Natural killer cell (primary cell): ENCODE measurements at regions of chr1 and their contacts with region 1.

Region 1: DNA sequence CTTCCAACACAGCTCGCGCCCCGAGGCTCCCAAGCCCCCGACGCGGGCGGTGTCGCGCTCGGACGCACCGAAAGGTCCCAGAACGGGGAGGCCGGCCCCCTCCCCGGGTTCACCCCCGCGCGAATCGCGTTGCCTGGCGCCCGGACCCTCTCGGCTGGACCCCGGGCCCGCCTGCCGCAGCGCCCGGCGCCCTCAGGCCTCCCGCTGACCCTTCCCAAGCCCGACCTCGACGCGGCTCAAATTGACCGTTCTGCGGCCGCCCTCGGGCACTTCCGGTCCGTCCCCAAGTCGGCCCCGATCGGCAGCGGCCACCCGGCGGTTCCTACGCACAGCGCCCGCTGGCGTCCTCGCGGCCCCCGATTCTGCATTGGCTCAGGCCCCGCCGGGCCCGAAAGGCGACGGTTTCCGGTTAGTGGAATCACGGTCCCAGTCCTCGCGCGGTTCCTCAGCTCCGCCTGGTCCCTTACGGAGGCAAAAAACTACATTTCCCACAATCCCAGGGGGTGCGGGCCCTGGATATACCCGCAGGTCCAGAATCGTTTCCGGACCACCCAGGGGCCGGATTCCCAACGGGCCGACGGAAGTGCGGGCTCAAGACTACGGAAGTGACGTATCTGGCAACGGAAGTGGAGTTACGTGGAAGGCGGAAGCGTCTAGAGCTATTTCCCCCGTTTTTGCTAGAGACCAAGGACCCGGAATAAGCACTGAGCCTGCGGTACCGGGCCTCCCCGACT is at the start of gene AURKAIP1:
- DNase-seq: peak; percentile 90 to 99
- ATAC-seq: peak; percentile 76 to 91 (median 81)
- H3K4me3 ChIP-seq: peak within 1 kb of the TSS; percentile 80
- H3K4me3 Mint-ChIP-seq: peak within 1 kb of the TSS; percentile 97
- H3K27ac ChIP-seq: peak within 1 kb of the TSS; percentile 96
- H3K27ac Mint-ChIP-seq: peak within 1 kb of the TSS; percentile 97 to 98
- H3K4me1 ChIP-seq: peaks cover 49% of the 10 kb centered on the region
- H3K4me1 Mint-ChIP-seq: peaks cover 10 to 27% of the 10 kb centered on the region in 2 donors
- H3K27me3 ChIP-seq: no peaks in the 10 kb centered on the region
- H3K27me3 Mint-ChIP-seq: no peaks in the 10 kb centered on the region
- CTCF ChIP-seq: no peak
- total RNA-seq, gene AURKAIP1: 60.0 to 76.3 (median 64.6) TPM

Region 2: DNA sequence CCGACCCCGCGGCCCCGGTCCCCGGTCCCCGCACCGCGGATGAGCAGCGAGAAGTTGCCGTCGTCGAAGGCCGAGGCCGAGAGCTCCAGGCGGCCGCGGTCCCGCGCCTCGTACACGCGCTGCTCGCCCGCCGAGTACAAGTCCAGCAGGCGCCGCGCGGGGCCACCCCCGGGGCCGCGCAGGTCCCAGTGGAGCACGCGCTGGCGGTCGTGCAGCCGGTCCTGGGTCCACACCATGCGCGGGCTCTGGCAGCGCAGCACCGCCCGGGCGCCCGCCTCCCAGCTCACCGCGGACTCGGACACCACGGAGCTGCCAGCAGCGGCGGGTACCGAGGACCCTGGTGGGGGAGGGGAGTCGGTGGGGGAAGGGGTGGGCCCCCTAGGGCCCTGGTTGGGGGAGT is 19.7 kb before region 1 on chr1:
- intact Hi-C with region 1: loop called (anchors 2 kb)
- DNase-seq: no peak
- ATAC-seq: peak in 2 of 3 donors; percentile 48 to 60
- H3K4me3 ChIP-seq: no peak overlapping the region
- H3K4me3 Mint-ChIP-seq: no peak overlapping the region
- H3K27ac ChIP-seq: no peak overlapping the region
- H3K27ac Mint-ChIP-seq: no peak overlapping the region
- H3K4me1 ChIP-seq: peaks cover 38% of the 10 kb centered on the region
- H3K4me1 Mint-ChIP-seq: peaks cover 0 to 26% of the 10 kb centered on the region in 2 donors
- H3K27me3 ChIP-seq: peaks cover 39% of the 10 kb centered on the region
- H3K27me3 Mint-ChIP-seq: peaks cover 6 to 14% of the 10 kb centered on the region in 2 donors
- CTCF ChIP-seq: no peak

Region 3: GRCh38 chr1:1399187-1399871 is 24.2 kb after region 1 on chr1 and contains the start of gene CCNL2:
- intact Hi-C with region 1: loop called (anchors 1 kb)
- DNase-seq: peak; percentile 99
- ATAC-seq: peak; percentile 93 to 99 (median 95)
- H3K4me3 ChIP-seq: peak within 1 kb of the TSS; percentile 100
- H3K4me3 Mint-ChIP-seq: peak within 1 kb of the TSS; percentile 93
- H3K27ac ChIP-seq: peak within 1 kb of the TSS; percentile 92
- H3K27ac Mint-ChIP-seq: peak within 1 kb of the TSS; percentile 86 to 94
- H3K4me1 ChIP-seq: peaks cover 31% of the 10 kb centered on the region
- H3K4me1 Mint-ChIP-seq: peaks cover 29 to 46% of the 10 kb centered on the region in 2 donors
- H3K27me3 ChIP-seq: no peaks in the 10 kb centered on the region
- H3K27me3 Mint-ChIP-seq: no peaks in the 10 kb centered on the region
- CTCF ChIP-seq: peak; percentile 47
- total RNA-seq, gene CCNL2: 253 to 281 (median 274) TPM

Region 4: GRCh38 chr1:1406817-1407635 is 31.9 kb after region 1 on chr1 and contains the start of gene MRPL20:
- intact Hi-C with region 1: loop called (anchors 2 kb)
- DNase-seq: peak; percentile 94 to 99
- ATAC-seq: peak; percentile 94 to 97 (median 95)
- H3K4me3 ChIP-seq: peak within 1 kb of the TSS; percentile 76
- H3K4me3 Mint-ChIP-seq: peak within 1 kb of the TSS; percentile 90
- H3K27ac ChIP-seq: peak within 1 kb of the TSS; percentile 76
- H3K27ac Mint-ChIP-seq: peak within 1 kb of the TSS; percentile 86 to 88
- H3K4me1 ChIP-seq: peaks cover 25% of the 10 kb centered on the region
- H3K4me1 Mint-ChIP-seq: peaks cover 0 to 21% of the 10 kb centered on the region in 2 donors
- H3K27me3 ChIP-seq: no peaks in the 10 kb centered on the region
- H3K27me3 Mint-ChIP-seq: no peaks in the 10 kb centered on the region
- CTCF ChIP-seq: no peak
- total RNA-seq, gene MRPL20: 90.9 to 111 (median 92.7) TPM